ENCODE measurements at regions of chr6 and their contacts with region 1.

Region 1: GRCh38 chr6:138882369-138883017 is 86.6 kb downstream of the ECT2L start:
- DNase-seq: peak; percentile 74
- ATAC-seq: peak; percentile 91
- H3K4me3 ChIP-seq: peak overlapping the region; percentile 36; the same call in 1 of the 2 replicates
- H3K27ac ChIP-seq: peak overlapping the region; percentile 95
- H3K4me1 ChIP-seq: peaks cover 22% of the 10 kb centered on the region
- H3K27me3 ChIP-seq: no peaks in the 10 kb centered on the region
- CTCF ChIP-seq: no peak
- EP300 ChIP-seq: peak; percentile 79 to 87
- POLR2A ChIP-seq: no peak
- RAD21 ChIP-seq: no peak

Region 2: GRCh38 chr6:138869398-138869797 is 13.1 kb before region 1 on chr6:
- CTCF ChIA-PET with region 1: interaction called, 11 read pairs
- POLR2A ChIA-PET with region 1: interaction called, 8 read pairs
- RAD21 ChIA-PET with region 1: interaction called, 12 read pairs
- SMC1A ChIA-PET with region 1: interaction called, 22 read pairs
- in situ Hi-C with region 1: no loop called
- intact Hi-C with region 1: loop called (anchors 1 kb)
- DNase-seq: no peak
- ATAC-seq: no peak; the same call in 2 of the 3 replicates
- H3K4me3 ChIP-seq: no peak overlapping the region
- H3K27ac ChIP-seq: peak overlapping the region; percentile 34
- H3K4me1 ChIP-seq: peaks cover 21% of the 10 kb centered on the region
- H3K27me3 ChIP-seq: no peaks in the 10 kb centered on the region
- CTCF ChIP-seq: no peak
- EP300 ChIP-seq: no peak
- POLR2A ChIP-seq: no peak
- RAD21 ChIP-seq: no peak

Region 3: DNA sequence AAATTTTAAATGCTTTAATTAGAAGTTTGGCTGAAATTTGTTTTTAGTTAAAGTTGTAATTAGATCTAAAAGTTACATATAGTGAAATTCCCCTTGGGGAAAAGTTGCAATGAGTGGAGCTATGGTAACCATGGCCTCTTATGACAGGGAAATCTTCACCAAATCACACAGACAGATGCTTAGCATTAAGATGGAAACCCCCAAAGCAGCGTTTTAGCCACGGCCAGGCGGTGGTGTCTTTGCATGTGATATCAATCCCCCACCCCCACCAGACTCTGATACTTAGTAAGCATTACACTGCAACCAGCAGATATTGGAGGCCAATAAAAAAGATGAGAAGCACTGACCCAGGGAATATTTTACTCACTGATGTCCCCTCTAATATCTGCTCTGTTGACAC is 29.8 kb after region 1 on chr6:
- CTCF ChIA-PET with region 1: no interaction called
- POLR2A ChIA-PET with region 1: no interaction called
- RAD21 ChIA-PET with region 1: no interaction called
- SMC1A ChIA-PET with region 1: interaction called, 3 read pairs
- in situ Hi-C with region 1: no loop called
- intact Hi-C with region 1: loop called (anchors 1 kb)
- DNase-seq: no peak
- ATAC-seq: peak; percentile 65
- H3K4me3 ChIP-seq: no peak overlapping the region
- H3K27ac ChIP-seq: no peak overlapping the region
- H3K4me1 ChIP-seq: no peaks in the 10 kb centered on the region
- H3K27me3 ChIP-seq: no peaks in the 10 kb centered on the region
- CTCF ChIP-seq: peak in 1 of 3 experiments; percentile 18; a peak in 2 of 6 replicates
- EP300 ChIP-seq: 0 out of 4 replicates have a peak, but pooled peaks of 1 of the 2 experiments have one; percentile 15
- POLR2A ChIP-seq: no peak
- RAD21 ChIP-seq: no peak; the same call in 1 of the 2 replicates

Measured in GM12878 (cell line).